HCT116 (cell line): ENCODE measurements at regions of chr1 and their contacts with region 1.

Region 1: DNA sequence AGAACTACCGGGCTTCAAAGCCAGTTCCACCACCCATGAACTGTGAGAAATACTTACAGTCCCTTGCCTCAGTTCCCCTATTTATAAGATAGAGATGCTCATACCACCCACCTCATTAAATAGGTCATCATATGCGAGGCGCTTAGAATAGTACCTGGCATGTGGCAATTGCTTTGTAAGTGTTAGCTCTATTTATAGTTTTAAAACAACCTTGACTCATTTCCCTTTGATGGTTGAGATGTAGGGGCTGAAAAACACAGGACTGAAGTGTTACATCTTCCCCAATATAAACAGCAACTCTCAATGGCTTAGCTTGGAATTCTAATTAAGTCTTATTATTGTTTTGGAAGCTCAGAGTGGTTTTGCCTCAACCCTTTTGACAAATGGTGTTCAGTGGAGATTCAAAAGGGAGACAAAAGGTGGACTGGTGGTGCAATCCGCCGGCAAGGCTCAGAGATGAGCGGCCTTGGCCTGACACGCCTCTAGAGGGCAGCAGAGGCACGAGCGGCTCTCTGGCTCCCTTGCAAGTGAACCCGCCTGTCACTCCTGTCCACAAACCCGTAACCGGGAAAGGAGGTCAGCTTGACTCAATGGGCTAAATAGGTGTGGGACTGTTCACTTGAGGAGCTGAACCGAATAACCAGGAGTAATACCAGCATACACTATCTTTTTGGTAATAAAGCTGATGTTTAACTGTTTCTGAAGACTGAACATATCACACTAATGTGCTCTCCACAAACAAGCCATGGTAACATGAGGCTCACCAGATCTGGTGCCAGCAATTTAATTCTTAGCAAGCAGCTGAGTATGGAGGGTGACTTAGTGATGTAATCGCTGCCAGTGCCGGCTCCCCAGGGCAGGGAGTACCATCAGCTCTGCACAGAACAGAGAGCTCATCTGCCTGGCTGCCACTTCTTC is 19.5 kb upstream of the SMYD2 start:
- DNase-seq: peak; percentile 64
- ATAC-seq: peak; percentile 99
- H3K4me3 ChIP-seq: no peak overlapping the region
- H3K27ac ChIP-seq: no peak overlapping the region
- H3K4me1 ChIP-seq: peaks cover 0 to 10% of the 10 kb centered on the region in 2 experiments; a peak in 1 of 4 replicates
- H3K27me3 ChIP-seq: no peaks in the 10 kb centered on the region
- CTCF ChIP-seq: peak; percentile 78 to 96 (median 94)
- POLR2A ChIP-seq: no peak
- RAD21 ChIP-seq: peak; percentile 89

Region 2: GRCh38 chr1:214251354-214251753 is 10.1 kb before region 1 on chr1:
- CTCF ChIA-PET with region 1: interaction called, 16 read pairs
- POLR2A ChIA-PET with region 1: no interaction called
- RAD21 ChIA-PET with region 1: no interaction called
- intact Hi-C with region 1: no loop called
- DNase-seq: no peak
- ATAC-seq: no peak
- H3K4me3 ChIP-seq: no peak overlapping the region
- H3K27ac ChIP-seq: no peak overlapping the region
- H3K4me1 ChIP-seq: no peaks in the 10 kb centered on the region
- H3K27me3 ChIP-seq: no peaks in the 10 kb centered on the region; the same call in 1 of the 2 replicates
- CTCF ChIP-seq: no peak
- POLR2A ChIP-seq: no peak
- RAD21 ChIP-seq: no peak

Region 3: GRCh38 chr1:214321705-214322453 is 60.4 kb after region 1 on chr1:
- CTCF ChIA-PET with region 1: interaction called, 3 read pairs
- POLR2A ChIA-PET with region 1: no interaction called
- RAD21 ChIA-PET with region 1: no interaction called
- intact Hi-C with region 1: loop called (anchors 2 kb)
- DNase-seq: no peak
- ATAC-seq: no peak
- H3K4me3 ChIP-seq: no peak overlapping the region
- H3K27ac ChIP-seq: no peak overlapping the region
- H3K4me1 ChIP-seq: no peaks in the 10 kb centered on the region
- H3K27me3 ChIP-seq: no peaks in the 10 kb centered on the region
- CTCF ChIP-seq: no peak
- POLR2A ChIP-seq: no peak
- RAD21 ChIP-seq: no peak

Region 4: GRCh38 chr1:214372092-214372491 is 110.6 kb after region 1 on chr1:
- CTCF ChIA-PET with region 1: no interaction called
- POLR2A ChIA-PET with region 1: no interaction called
- RAD21 ChIA-PET with region 1: no interaction called
- intact Hi-C with region 1: no loop called
- DNase-seq: no peak
- ATAC-seq: no peak
- H3K4me3 ChIP-seq: no peak overlapping the region
- H3K27ac ChIP-seq: no peak overlapping the region
- H3K4me1 ChIP-seq: no peaks in the 10 kb centered on the region
- H3K27me3 ChIP-seq: no peaks in the 10 kb centered on the region
- CTCF ChIP-seq: no peak
- POLR2A ChIP-seq: no peak
- RAD21 ChIP-seq: no peak

Region 5: DNA sequence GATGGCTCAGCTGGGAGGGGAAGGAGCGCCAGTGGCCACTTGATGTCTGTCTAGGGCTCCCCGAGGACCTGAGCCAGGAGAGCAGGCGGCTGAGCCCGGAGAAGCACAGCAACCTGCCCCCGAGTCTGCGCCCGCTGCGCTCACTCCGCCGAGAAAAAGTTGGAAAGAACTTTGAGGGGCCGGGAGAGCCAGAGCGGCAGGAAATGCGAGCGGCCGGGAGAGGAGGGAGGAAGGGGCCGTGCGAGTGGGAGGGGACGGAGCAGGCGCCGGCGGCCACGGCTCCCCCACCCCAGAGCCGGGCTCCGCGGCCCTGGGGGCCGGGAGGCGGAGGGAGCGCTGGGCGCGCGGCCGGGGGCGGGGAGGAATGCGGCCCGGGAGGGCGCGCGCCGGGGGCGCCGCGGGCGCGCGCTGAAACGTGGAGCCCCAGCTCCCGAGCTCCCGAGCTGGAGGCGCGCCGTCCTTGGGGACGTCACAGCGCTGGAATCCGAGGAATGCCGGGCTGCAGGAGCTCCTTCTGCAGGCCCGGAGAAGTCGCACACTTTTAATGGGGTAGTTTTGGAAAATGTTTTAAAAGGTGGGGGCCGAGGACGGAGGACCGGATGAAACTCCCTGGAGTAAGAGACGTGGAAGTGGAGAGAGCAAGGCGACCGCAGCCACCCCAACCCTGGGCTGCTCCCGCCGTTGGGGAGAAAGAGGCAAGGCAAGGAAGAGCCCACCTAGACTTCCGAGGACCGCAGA is 290.1 kb after region 1 on chr1 and contains the start of gene PTPN14:
- CTCF ChIA-PET with region 1: no interaction called
- POLR2A ChIA-PET with region 1: no interaction called
- RAD21 ChIA-PET with region 1: no interaction called
- intact Hi-C with region 1: no loop called
- DNase-seq: peak; percentile 85
- ATAC-seq: peak; percentile 83
- H3K4me3 ChIP-seq: peak within 1 kb of the TSS; percentile 80 to 93
- H3K27ac ChIP-seq: peak within 1 kb of the TSS; percentile 87
- H3K4me1 ChIP-seq: peaks cover 30 to 39% of the 10 kb centered on the region in 2 experiments
- H3K27me3 ChIP-seq: no peaks in the 10 kb centered on the region
- CTCF ChIP-seq: peak in 2 of 3 experiments; percentile 25 to 33; a peak in 3 of 6 replicates
- POLR2A ChIP-seq: no peak
- RAD21 ChIP-seq: 0 out of 2 replicates have a peak, but pooled peaks have one; percentile 19
- total RNA-seq, gene PTPN14: 37.5 TPM

Region 6: GRCh38 chr1:214581785-214582184 is 320.3 kb after region 1 on chr1:
- CTCF ChIA-PET with region 1: no interaction called
- POLR2A ChIA-PET with region 1: no interaction called
- RAD21 ChIA-PET with region 1: no interaction called
- intact Hi-C with region 1: no loop called
- DNase-seq: peak; percentile 33
- ATAC-seq: peak; percentile 78
- H3K4me3 ChIP-seq: no peak overlapping the region
- H3K27ac ChIP-seq: no peak overlapping the region
- H3K4me1 ChIP-seq: peaks cover 12 to 22% of the 10 kb centered on the region in 2 experiments
- H3K27me3 ChIP-seq: no peaks in the 10 kb centered on the region
- CTCF ChIP-seq: no peak
- POLR2A ChIP-seq: no peak
- RAD21 ChIP-seq: peak; percentile 18; the same call in 1 of the 2 replicates

Region 7: GRCh38 chr1:214648801-214649200 is 387.3 kb after region 1 on chr1:
- CTCF ChIA-PET with region 1: no interaction called
- POLR2A ChIA-PET with region 1: no interaction called
- RAD21 ChIA-PET with region 1: no interaction called
- intact Hi-C with region 1: no loop called
- DNase-seq: no peak
- ATAC-seq: no peak
- H3K4me3 ChIP-seq: no peak overlapping the region
- H3K27ac ChIP-seq: no peak overlapping the region
- H3K4me1 ChIP-seq: no peaks in the 10 kb centered on the region
- H3K27me3 ChIP-seq: no peaks in the 10 kb centered on the region
- CTCF ChIP-seq: no peak
- POLR2A ChIP-seq: no peak
- RAD21 ChIP-seq: no peak